T-cell (primary cell): ENCODE measurements at regions of chr12 and their contacts with region 1.

Region 1: GRCh38 chr12:39619660-39620433 is at the start of gene ABCD2:
- DNase-seq: peak; percentile 46 to 93 (median 70)
- ATAC-seq: peak; percentile 81 to 86 (median 84)
- H3K4me3 ChIP-seq: peak within 1 kb of the TSS; percentile 67 to 74
- H3K4me3 Mint-ChIP-seq: no peak within 1 kb of the TSS
- H3K27ac ChIP-seq: peak within 1 kb of the TSS; percentile 92
- H3K27ac Mint-ChIP-seq: no peak within 1 kb of the TSS
- H3K4me1 ChIP-seq: peaks cover 21 to 46% of the 10 kb centered on the region in 2 experiments
- H3K4me1 Mint-ChIP-seq: peaks cover 36 to 49% (median 44%) of the 10 kb centered on the region in 3 donors
- H3K27me3 ChIP-seq: no peaks in the 10 kb centered on the region
- H3K27me3 Mint-ChIP-seq: no peaks in the 10 kb centered on the region
- total RNA-seq, gene ABCD2: 10.9 to 16.8 (median 14.7) TPM

Region 2: GRCh38 chr12:39692258-39692853 is 72.5 kb after region 1 on chr12:
- CTCF ChIA-PET with region 1: interaction called in 1 of 2 experiments, 27 read pairs
- POLR2A ChIA-PET with region 1: interaction called in 1 of 2 experiments, 3 read pairs
- DNase-seq: peak in 1 of 35 experiments; percentile 41
- ATAC-seq: peak in 3 of 4 experiments; percentile 37 to 55 (median 48)
- H3K4me3 ChIP-seq: no peak overlapping the region
- H3K4me3 Mint-ChIP-seq: no peak overlapping the region
- H3K27ac ChIP-seq: no peak overlapping the region
- H3K27ac Mint-ChIP-seq: no peak overlapping the region
- H3K4me1 ChIP-seq: no peaks in the 10 kb centered on the region
- H3K4me1 Mint-ChIP-seq: peaks cover 0 to 9% (median 8%) of the 10 kb centered on the region in 3 donors
- H3K27me3 ChIP-seq: no peaks in the 10 kb centered on the region
- H3K27me3 Mint-ChIP-seq: no peaks in the 10 kb centered on the region